Heart left ventricle (tissue), 16 donors: ENCODE measurements at regions of chr12 and their contacts with region 1.

Region 1: GRCh38 chr12:124767066-124767821 is 96.4 kb downstream of the SCARB1 start:
- DNase-seq: peak; percentile 73 to 90 (median 81)
- ATAC-seq: peak; percentile 71 to 82 (median 76)
- H3K4me3 ChIP-seq: no peak overlapping the region
- H3K27ac ChIP-seq: peak overlapping the region in 8 of 12 donors; percentile 60 to 86 (median 74)
- H3K4me1 ChIP-seq: peaks cover 0 to 59% (median 30%) of the 10 kb centered on the region in 12 donors
- H3K27me3 ChIP-seq: no peaks in the 10 kb centered on the region
- CTCF ChIP-seq: peak; percentile 98 to 100 (median 100)
- POLR2A ChIP-seq: no peak

Region 2: DNA sequence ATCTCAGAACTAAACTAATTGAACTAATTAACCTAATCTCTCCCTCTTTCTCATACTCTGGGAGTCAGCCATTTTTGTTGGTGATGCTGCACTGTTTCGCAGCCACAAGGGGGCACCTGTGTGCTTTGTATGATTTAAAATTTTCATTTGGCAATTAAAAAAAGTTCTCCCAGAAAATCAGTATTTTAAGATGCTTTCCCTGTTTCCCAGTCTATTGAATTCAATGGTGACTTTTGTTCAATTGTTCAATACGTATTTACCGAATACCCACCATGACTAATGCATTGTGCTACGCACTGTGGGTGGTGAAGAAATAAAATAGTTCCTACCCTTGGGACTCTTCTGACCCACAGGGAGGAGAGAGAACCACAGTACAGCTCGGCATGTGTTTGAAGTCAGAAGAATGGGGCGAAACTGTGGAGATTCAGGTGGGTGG is 730.6 kb before region 1 on chr12:
- intact Hi-C with region 1: loop called (anchors 1 to 5 kb)
- DNase-seq: peak in 1 of 5 donors; percentile 49
- ATAC-seq: peak in 3 of 4 donors; percentile 35 to 55 (median 51)
- H3K4me3 ChIP-seq: no peak overlapping the region
- H3K27ac ChIP-seq: no peak overlapping the region
- H3K4me1 ChIP-seq: peaks cover 0 to 9% (median 0%) of the 10 kb centered on the region in 12 donors
- H3K27me3 ChIP-seq: no peaks in the 10 kb centered on the region
- CTCF ChIP-seq: peak; percentile 84 to 99 (median 94)
- POLR2A ChIP-seq: no peak

Region 3: DNA sequence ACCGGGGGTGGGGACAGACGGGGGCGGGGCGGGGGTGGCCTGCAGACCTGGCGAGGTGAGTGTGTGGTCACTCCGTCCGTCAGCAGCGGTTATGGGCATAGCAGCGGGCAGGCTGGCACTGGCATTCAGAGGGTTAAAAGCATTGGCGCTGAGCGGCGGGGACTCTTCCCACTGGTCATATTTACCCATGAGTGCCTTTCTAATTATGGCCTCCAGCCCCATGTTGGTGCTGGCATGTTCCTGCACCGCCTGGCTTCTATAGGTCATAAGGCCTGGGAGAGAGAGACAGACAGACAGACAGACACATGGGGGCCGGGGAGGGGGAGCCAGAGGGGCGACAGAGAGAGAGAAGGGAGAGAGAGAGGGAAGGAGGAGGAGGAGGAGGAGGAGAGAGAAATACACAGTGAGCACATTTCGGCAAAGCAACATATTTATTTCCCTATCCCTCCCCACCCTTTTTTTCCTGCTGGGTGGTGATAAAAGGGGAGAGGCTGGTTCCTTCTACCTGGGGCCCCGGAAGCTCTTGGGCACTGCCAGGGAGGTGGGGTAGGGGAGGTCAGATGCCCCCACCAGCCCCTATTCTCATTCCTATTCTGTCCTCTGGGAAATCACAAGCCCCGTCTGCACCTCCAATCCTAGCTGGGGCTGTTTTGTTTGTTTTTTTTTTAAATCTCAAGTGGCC is 439.7 kb before region 1 on chr12:
- intact Hi-C with region 1: loop called in 6 of 10 experiments (anchors 2 to 10 kb)
- DNase-seq: peak in 3 of 5 donors; percentile 47 to 67 (median 48)
- ATAC-seq: peak; percentile 56 to 82 (median 74)
- H3K4me3 ChIP-seq: peak overlapping the region in 3 of 12 donors; percentile 7 to 29 (median 11)
- H3K27ac ChIP-seq: peak overlapping the region; percentile 52 to 91 (median 80)
- H3K4me1 ChIP-seq: peaks cover 0 to 26% (median 8%) of the 10 kb centered on the region in 12 donors
- H3K27me3 ChIP-seq: no peaks in the 10 kb centered on the region
- CTCF ChIP-seq: no peak
- POLR2A ChIP-seq: no peak

Region 4: GRCh38 chr12:124369055-124369900 is 398.0 kb before region 1 on chr12:
- intact Hi-C with region 1: loop called in 1 of 10 experiments (anchors 10 kb)
- DNase-seq: peak; percentile 93 to 96 (median 94)
- ATAC-seq: peak; percentile 82 to 90 (median 88)
- H3K4me3 ChIP-seq: peak overlapping the region in 2 of 12 donors; percentile 12 to 16
- H3K27ac ChIP-seq: peak overlapping the region; percentile 74 to 99 (median 94)
- H3K4me1 ChIP-seq: peaks cover 8 to 76% (median 56%) of the 10 kb centered on the region in 12 donors
- H3K27me3 ChIP-seq: no peaks in the 10 kb centered on the region
- CTCF ChIP-seq: peak; percentile 23 to 69 (median 52)
- POLR2A ChIP-seq: peak in 1 of 2 donors; percentile 14

Region 5: DNA sequence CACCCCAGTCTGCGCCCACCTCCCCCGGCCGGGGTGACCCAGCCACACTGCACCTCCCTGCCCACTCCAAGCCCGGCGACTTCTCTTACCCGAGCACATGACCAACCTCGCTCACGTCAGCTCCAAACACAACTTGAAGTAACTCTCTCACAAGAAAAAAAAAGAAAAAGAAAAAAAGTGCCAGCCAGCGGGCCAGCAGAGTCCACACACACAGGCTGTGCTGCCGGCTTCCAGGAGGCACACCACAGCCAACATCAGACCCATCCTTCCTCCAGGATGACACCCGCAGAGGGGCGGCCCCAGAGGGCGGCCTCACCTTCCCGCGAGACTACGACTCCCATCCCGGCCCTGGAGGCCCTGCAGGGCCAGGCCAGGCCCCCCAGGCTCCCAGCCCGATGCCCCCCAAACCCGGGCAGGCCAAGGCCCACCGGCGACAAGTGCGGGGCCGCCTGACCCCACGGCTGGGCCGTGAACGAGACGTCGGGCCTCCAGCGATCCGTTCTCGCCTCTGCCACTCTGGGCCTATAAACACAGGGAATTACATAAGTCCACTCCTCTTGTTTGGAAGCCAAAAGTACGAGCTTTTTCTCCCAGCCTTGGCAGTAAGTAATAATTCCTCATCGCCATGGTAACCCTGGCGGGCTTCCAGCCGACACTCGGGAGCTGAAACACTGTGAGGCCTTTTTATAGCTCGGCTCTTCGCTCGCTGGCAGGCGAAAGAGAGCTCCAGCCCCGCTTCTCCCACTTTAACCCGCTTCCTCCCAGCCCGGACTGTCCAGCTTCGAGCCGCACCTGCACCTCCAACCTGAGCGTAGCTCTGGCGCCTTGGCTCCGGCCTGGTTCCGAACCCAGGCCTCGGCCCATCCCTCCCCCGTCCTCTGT is 249.0 kb before region 1 on chr12:
- intact Hi-C with region 1: loop called in 4 of 10 experiments (anchors 5 to 10 kb)
- DNase-seq: peak; percentile 97 to 99 (median 98)
- ATAC-seq: peak; percentile 69 to 79 (median 72)
- H3K4me3 ChIP-seq: peak overlapping the region; percentile 35 to 81 (median 58)
- H3K27ac ChIP-seq: peak overlapping the region; percentile 90 to 100 (median 95)
- H3K4me1 ChIP-seq: peaks cover 15 to 98% (median 85%) of the 10 kb centered on the region in 12 donors
- H3K27me3 ChIP-seq: no peaks in the 10 kb centered on the region
- CTCF ChIP-seq: no peak
- POLR2A ChIP-seq: peak in 1 of 2 donors; percentile 32

Region 6: DNA sequence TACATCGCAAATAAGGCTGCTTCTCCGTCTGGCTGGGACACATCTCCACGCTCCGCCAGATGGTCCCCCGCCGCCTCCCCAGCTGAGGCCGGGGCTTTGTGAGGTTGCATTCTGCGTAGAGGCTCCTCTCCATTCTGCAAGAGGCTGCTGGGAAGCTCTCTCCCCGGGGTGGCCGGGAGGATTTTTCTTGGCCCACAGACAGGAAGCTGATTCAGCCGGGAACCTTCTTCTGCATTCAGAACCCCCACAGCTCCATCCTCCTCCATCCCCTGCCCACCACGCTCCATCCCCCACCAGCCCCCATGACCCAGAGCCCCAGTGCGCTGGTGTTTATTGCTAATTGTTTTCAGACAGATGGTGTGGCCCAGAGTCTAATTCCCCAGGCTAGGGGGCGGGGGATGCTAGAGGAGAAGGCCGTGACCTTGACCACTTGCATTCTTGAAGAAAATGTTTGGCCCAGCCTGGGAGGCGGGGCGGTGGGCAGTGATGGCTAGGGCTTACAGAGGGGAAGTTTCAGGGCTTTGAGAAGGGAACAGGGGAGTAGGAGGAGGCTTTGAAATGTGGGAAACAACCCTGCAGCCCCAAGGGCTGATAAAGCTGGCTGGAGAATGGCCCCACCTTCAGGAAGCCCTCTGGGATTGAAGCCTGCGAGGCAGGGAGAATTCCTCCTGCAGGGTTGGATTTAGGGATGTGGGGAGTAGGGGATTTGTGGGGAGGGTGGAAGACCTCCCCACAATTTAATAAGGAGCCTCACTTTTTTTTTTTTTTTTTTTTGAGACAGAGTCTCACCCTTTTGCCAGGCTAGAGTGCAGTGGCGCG is 111.3 kb before region 1 on chr12:
- intact Hi-C with region 1: loop called in 1 of 10 experiments (anchors 10 kb)
- DNase-seq: peak; percentile 87 to 91 (median 90)
- ATAC-seq: peak; percentile 70 to 81 (median 79)
- H3K4me3 ChIP-seq: peak overlapping the region in 8 of 12 donors; percentile 1 to 42 (median 24)
- H3K27ac ChIP-seq: peak overlapping the region; percentile 43 to 92 (median 84)
- H3K4me1 ChIP-seq: peaks cover 3 to 64% (median 44%) of the 10 kb centered on the region in 12 donors
- H3K27me3 ChIP-seq: no peaks in the 10 kb centered on the region
- CTCF ChIP-seq: no peak
- POLR2A ChIP-seq: no peak